Endothelial cell of umbilical vein (primary cell): ENCODE measurements at regions of chr9 and their contacts with region 1.

Region 1: DNA sequence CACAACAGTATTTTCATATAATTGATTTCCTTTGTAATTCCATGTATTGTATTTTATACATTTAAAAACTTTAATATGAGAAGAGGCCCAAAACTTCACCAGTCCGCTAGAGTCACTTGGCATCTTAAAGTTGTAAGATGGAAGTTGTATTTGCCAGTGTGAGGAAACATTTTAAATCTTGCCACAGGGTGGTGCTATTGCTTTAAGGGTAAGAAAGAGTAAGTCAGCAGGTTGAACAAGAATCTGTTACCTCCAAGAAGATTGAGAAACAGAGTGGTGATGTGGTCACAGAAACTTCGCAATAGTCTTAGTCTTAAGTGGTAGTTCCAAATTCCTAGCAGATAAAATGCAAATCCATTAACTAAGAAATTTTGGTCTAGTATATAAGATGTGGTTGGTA is 39.8 kb upstream of the RANBP6 start:
- DNase-seq: peak; percentile 91
- H3K4me3 ChIP-seq: no peak overlapping the region
- H3K27ac ChIP-seq: no peak overlapping the region
- H3K4me1 ChIP-seq: no peaks in the 10 kb centered on the region
- H3K27me3 ChIP-seq: no peaks in the 10 kb centered on the region
- CTCF ChIP-seq: peak; percentile 37
- POLR2A ChIP-seq: no peak

Region 2: GRCh38 chr9:5832543-5833529 is 222.4 kb before region 1 on chr9 and contains the start of gene ERMP1:
- CTCF ChIA-PET with region 1: interaction called, 20 read pairs
- POLR2A ChIA-PET with region 1: no interaction called
- dilution Hi-C with region 1: no loop called
- intact Hi-C with region 1: no loop called
- DNase-seq: peak; percentile 87
- H3K4me3 ChIP-seq: peak within 1 kb of the TSS; percentile 61 to 95 (median 61)
- H3K27ac ChIP-seq: no peak within 1 kb of the TSS
- H3K4me1 ChIP-seq: peaks cover 5% of the 10 kb centered on the region
- H3K27me3 ChIP-seq: no peaks in the 10 kb centered on the region
- CTCF ChIP-seq: peak; percentile 92 to 93
- POLR2A ChIP-seq: peak; percentile 49
- total RNA-seq, gene ERMP1: 16.6 and 20.1 TPM in 2 replicates

Region 3: GRCh38 chr9:5895782-5896181 is 159.4 kb before region 1 on chr9:
- CTCF ChIA-PET with region 1: interaction called, 18 read pairs
- POLR2A ChIA-PET with region 1: no interaction called
- dilution Hi-C with region 1: no loop called
- intact Hi-C with region 1: no loop called
- DNase-seq: peak; percentile 14
- H3K4me3 ChIP-seq: no peak overlapping the region
- H3K27ac ChIP-seq: no peak overlapping the region
- H3K4me1 ChIP-seq: no peaks in the 10 kb centered on the region
- H3K27me3 ChIP-seq: peaks cover 0 to 3% of the 10 kb centered on the region in 2 experiments
- CTCF ChIP-seq: no peak
- POLR2A ChIP-seq: no peak

Region 4: DNA sequence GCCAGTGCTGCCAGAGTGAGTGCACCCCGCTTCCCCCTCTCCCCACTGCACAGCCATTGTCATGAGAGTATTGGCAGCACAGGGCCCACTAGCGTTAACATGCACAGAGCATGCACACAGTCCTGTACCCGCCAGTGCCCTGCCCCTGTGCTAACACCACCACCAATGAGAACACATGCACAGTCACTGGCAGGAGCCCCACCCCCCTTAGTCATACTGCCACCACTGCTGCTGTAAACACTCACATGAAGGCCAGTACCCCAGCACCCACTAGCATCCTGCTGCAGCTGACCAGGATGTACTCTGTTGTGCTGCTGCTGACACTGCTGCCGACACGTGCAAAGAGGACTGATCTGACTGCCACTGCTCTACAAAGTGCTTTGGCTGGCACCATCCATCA is 20.3 kb before region 1 on chr9:
- CTCF ChIA-PET with region 1: interaction called, 16 read pairs
- POLR2A ChIA-PET with region 1: no interaction called
- dilution Hi-C with region 1: no loop called
- intact Hi-C with region 1: no loop called
- DNase-seq: no peak
- H3K4me3 ChIP-seq: no peak overlapping the region
- H3K27ac ChIP-seq: no peak overlapping the region
- H3K4me1 ChIP-seq: no peaks in the 10 kb centered on the region
- H3K27me3 ChIP-seq: peaks cover 4 to 14% of the 10 kb centered on the region in 2 experiments
- CTCF ChIP-seq: no peak
- POLR2A ChIP-seq: no peak

Region 5: GRCh38 chr9:6197330-6197729 is 142.1 kb after region 1 on chr9:
- CTCF ChIA-PET with region 1: interaction called, 41 read pairs
- POLR2A ChIA-PET with region 1: no interaction called
- dilution Hi-C with region 1: no loop called
- intact Hi-C with region 1: loop called (anchors 1 kb)
- DNase-seq: peak; percentile 67
- H3K4me3 ChIP-seq: no peak overlapping the region
- H3K27ac ChIP-seq: no peak overlapping the region
- H3K4me1 ChIP-seq: peaks cover 18% of the 10 kb centered on the region
- H3K27me3 ChIP-seq: no peaks in the 10 kb centered on the region
- CTCF ChIP-seq: peak; percentile 29 to 42
- POLR2A ChIP-seq: no peak

Region 6: GRCh38 chr9:6353851-6354686 is 298.9 kb after region 1 on chr9:
- CTCF ChIA-PET with region 1: interaction called, 12 read pairs
- POLR2A ChIA-PET with region 1: no interaction called
- dilution Hi-C with region 1: no loop called
- intact Hi-C with region 1: no loop called
- DNase-seq: peak; percentile 72
- H3K4me3 ChIP-seq: no peak overlapping the region
- H3K27ac ChIP-seq: no peak overlapping the region
- H3K4me1 ChIP-seq: peaks cover 4% of the 10 kb centered on the region
- H3K27me3 ChIP-seq: no peaks in the 10 kb centered on the region
- CTCF ChIP-seq: peak; percentile 67 to 69
- POLR2A ChIP-seq: no peak